ENCODE measurements at regions of chr19 and their contacts with region 1.

Region 1: DNA sequence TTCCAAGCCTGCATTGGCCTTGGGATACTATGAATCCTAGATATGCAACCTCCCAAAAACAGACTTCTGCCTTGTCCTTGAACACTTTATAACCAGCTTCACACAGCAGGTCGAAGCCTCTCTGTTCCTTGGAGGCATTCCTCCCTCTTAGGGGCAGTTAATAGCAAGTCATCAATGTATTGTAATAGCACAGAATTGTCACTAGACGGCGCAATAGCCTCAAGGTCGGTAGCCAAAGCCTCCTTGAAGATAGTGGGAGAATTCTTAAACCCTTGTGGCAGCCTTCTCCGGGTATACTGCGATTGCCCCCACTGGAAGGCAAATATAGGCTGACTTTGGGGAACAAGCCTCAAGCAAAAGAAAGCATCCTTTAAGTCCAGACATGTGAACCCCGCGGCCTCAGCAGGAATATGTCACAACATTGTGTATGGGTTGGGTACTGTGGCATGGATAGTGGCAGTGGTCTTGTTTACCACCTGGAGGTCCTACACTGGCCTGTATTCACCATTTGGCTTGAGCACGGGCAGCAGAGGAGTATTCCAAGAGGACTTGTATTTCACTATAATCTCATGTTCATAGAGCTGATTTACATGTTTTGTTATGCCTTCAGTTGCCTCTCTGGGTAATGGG is 61.1 kb downstream of the ZNF431 start:
- DNase-seq: peak; percentile 13 to 19
- H3K4me3 ChIP-seq: no peak overlapping the region
- H3K27ac ChIP-seq: no peak overlapping the region
- H3K4me1 ChIP-seq: peaks cover 3 to 11% of the 10 kb centered on the region in 2 donors
- H3K27me3 ChIP-seq: no peaks in the 10 kb centered on the region
- CTCF ChIP-seq: peak; percentile 62 to 89 (median 84)
- POLR2A ChIP-seq: no peak

Region 2: GRCh38 chr19:21256722-21257121 is 53.7 kb after region 1 on chr19:
- intact Hi-C with region 1: loop called (anchors 5 kb)
- DNase-seq: peak; percentile 21 to 23
- H3K4me3 ChIP-seq: no peak overlapping the region
- H3K27ac ChIP-seq: no peak overlapping the region
- H3K4me1 ChIP-seq: no peaks in the 10 kb centered on the region
- H3K27me3 ChIP-seq: no peaks in the 10 kb centered on the region
- CTCF ChIP-seq: peak in 5 of 6 experiments; percentile 49 to 92 (median 84)
- POLR2A ChIP-seq: no peak

Region 3: DNA sequence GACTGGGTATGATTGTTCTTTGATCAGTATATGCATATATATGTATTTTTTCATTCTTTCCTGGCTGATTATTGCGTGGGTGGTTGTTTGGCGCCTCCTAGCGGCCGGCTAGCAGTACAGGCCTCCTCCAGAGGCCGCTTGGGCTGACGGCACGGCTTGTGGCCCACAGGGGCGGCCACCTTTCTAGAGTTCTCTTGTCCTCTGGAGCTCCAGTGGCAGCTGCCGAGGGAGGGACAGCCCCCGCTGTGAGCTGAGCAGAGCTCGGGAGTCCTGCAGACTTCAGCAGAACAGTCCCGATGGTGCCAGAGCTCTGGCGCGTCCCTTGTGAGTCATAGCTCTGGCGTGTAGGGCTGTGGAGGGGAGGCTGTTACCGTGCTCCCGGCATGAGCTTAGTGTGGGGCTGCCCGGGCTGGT is 279.9 kb after region 1 on chr19:
- intact Hi-C with region 1: loop called (anchors 10 kb)
- DNase-seq: peak; percentile 40 to 66
- H3K4me3 ChIP-seq: no peak overlapping the region
- H3K27ac ChIP-seq: no peak overlapping the region
- H3K4me1 ChIP-seq: peaks cover 0 to 3% of the 10 kb centered on the region in 2 donors
- H3K27me3 ChIP-seq: no peaks in the 10 kb centered on the region
- CTCF ChIP-seq: peak; percentile 65 to 86 (median 74)
- POLR2A ChIP-seq: no peak